ENCODE measurements at regions of chr5 and their contacts with region 1.

Region 1: GRCh38 chr5:36728697-36729543 is 122.5 kb downstream of the SLC1A3 start:
- DNase-seq: peak in 3 of 9 experiments; percentile 21 to 73 (median 64)
- ATAC-seq: peak; percentile 64
- H3K4me3 ChIP-seq: no peak overlapping the region
- H3K4me3 Mint-ChIP-seq: no peak overlapping the region
- H3K27ac ChIP-seq: no peak overlapping the region
- H3K27ac Mint-ChIP-seq: no peak overlapping the region
- H3K4me1 ChIP-seq: no peaks in the 10 kb centered on the region
- H3K4me1 Mint-ChIP-seq: peaks cover 14% of the 10 kb centered on the region
- H3K27me3 ChIP-seq: no peaks in the 10 kb centered on the region
- H3K27me3 Mint-ChIP-seq: peaks cover 2% of the 10 kb centered on the region
- CTCF ChIP-seq: peak; percentile 80

Region 2: GRCh38 chr5:36739751-36740221 is 10.9 kb after region 1 on chr5:
- CTCF ChIA-PET with region 1: interaction called, 18 read pairs
- POLR2A ChIA-PET with region 1: no interaction called
- intact Hi-C with region 1: no loop called
- DNase-seq: peak; percentile 31 to 76 (median 69)
- ATAC-seq: peak; percentile 97
- H3K4me3 ChIP-seq: no peak overlapping the region
- H3K4me3 Mint-ChIP-seq: no peak overlapping the region
- H3K27ac ChIP-seq: no peak overlapping the region
- H3K27ac Mint-ChIP-seq: no peak overlapping the region
- H3K4me1 ChIP-seq: peaks cover 6% of the 10 kb centered on the region
- H3K4me1 Mint-ChIP-seq: peaks cover 11% of the 10 kb centered on the region
- H3K27me3 ChIP-seq: no peaks in the 10 kb centered on the region
- H3K27me3 Mint-ChIP-seq: peaks cover 39% of the 10 kb centered on the region
- CTCF ChIP-seq: peak; percentile 76

Region 3: DNA sequence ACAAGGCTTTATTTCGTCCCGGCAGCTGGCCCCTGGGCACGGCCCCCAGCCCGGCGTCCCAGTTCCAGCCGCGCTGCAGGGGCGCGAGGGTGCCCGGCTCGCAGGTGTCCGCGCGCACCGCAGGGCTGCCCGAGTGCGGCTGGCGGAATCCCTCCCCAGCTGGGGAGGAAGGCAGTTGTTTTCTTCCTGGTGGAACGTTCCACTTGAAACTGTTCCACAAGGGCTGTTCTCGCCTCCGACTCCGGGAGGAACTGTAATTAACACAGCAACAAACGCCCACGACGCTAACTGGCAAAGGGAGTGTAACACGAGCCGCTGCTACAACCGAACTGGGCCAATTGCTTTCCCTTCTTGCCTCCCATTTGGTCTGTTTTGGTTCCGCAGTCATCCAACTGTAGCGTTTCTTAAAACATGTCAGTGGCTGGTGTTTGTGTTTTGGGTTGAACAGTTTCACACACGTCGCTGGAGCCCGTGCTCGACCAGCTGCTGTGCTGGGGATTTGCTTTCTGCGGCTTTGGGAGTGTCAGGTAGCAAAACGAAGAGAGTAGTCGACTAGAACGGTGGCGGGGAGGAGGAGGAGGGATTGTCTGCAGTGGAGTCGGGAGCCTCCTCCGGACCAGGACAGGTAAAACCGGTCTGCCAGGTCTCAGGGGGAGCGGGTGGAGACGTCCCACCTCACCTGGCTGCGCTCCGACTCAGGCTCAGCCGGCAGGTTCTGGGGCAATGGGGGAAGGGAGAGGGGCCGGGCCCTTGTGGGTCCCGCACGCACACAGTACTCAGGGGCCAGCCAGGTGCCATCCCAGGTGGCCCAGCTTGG is 16.1 kb after region 1 on chr5:
- CTCF ChIA-PET with region 1: interaction called, 18 read pairs
- POLR2A ChIA-PET with region 1: no interaction called
- intact Hi-C with region 1: no loop called
- DNase-seq: peak in 6 of 9 experiments; percentile 22 to 51 (median 26)
- ATAC-seq: peak; percentile 62
- H3K4me3 ChIP-seq: peak overlapping the region; percentile 37 to 74
- H3K4me3 Mint-ChIP-seq: peak overlapping the region; percentile 86
- H3K27ac ChIP-seq: no peak overlapping the region
- H3K27ac Mint-ChIP-seq: no peak overlapping the region
- H3K4me1 ChIP-seq: peaks cover 6% of the 10 kb centered on the region
- H3K4me1 Mint-ChIP-seq: peaks cover 16% of the 10 kb centered on the region
- H3K27me3 ChIP-seq: no peaks in the 10 kb centered on the region
- H3K27me3 Mint-ChIP-seq: peaks cover 43% of the 10 kb centered on the region
- CTCF ChIP-seq: no peak

Region 4: GRCh38 chr5:36870399-36871040 is 141.6 kb after region 1 on chr5:
- CTCF ChIA-PET with region 1: interaction called, 16 read pairs
- POLR2A ChIA-PET with region 1: no interaction called
- intact Hi-C with region 1: loop called in 1 of 2 experiments (anchors 1 kb)
- DNase-seq: peak in 2 of 9 experiments; percentile 73 to 82
- ATAC-seq: peak; percentile 75
- H3K4me3 ChIP-seq: no peak overlapping the region
- H3K4me3 Mint-ChIP-seq: no peak overlapping the region
- H3K27ac ChIP-seq: no peak overlapping the region
- H3K27ac Mint-ChIP-seq: peak overlapping the region; percentile 20
- H3K4me1 ChIP-seq: peaks cover 25% of the 10 kb centered on the region
- H3K4me1 Mint-ChIP-seq: peaks cover 46% of the 10 kb centered on the region
- H3K27me3 ChIP-seq: no peaks in the 10 kb centered on the region
- H3K27me3 Mint-ChIP-seq: no peaks in the 10 kb centered on the region
- CTCF ChIP-seq: peak; percentile 67

Region 5: GRCh38 chr5:37005946-37006540 is 277.1 kb after region 1 on chr5:
- CTCF ChIA-PET with region 1: interaction called, 9 read pairs
- POLR2A ChIA-PET with region 1: no interaction called
- intact Hi-C with region 1: loop called (anchors 2 to 5 kb)
- DNase-seq: peak in 2 of 9 experiments; percentile 16 to 36
- ATAC-seq: peak; percentile 51
- H3K4me3 ChIP-seq: no peak overlapping the region
- H3K4me3 Mint-ChIP-seq: no peak overlapping the region
- H3K27ac ChIP-seq: no peak overlapping the region
- H3K27ac Mint-ChIP-seq: no peak overlapping the region
- H3K4me1 ChIP-seq: no peaks in the 10 kb centered on the region
- H3K4me1 Mint-ChIP-seq: no peaks in the 10 kb centered on the region
- H3K27me3 ChIP-seq: no peaks in the 10 kb centered on the region
- H3K27me3 Mint-ChIP-seq: no peaks in the 10 kb centered on the region
- CTCF ChIP-seq: peak; percentile 62

Region 6: DNA sequence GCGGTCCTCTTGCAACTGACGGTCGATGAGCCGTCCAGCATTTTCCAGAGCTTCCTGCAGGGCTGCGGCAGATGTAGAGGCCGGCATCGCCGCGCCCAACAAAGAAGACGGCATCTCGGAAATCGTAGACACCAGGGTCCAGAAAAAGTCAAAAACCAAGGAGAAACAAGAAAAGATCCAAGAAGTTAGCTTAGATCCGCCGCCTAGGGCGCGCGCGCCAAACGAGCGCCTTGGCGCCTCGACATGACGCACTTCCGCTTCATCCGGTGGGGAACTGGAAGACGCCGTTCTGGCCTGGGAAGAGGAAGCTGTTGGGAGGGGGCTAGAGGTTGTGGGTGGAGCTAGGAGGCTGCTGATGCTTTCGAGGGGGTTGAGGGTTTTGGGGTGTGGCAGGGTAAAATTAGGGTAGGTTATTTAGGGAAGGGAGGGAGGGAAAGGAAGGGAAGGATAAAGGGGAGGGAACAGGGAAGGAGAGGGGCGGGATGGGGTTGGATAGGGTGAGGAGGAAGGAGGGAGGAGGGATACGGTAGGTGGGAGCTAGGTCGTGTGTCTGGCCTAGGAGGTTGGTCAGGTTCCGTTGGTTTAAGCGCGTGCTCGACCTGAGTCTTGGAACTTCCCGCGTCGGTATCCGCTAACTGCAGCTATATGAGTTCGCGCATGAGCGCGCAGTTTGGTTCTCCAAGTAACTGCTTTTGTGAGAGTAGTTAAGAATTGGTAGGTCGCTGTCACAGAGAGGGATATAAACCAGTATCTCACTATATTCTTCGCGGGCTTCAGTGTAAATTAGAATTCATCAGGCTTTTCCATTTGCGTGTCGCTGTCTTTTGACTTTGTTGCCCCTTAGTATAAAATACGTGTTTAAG is 642.2 kb after region 1 on chr5 and contains the start of gene NUP155:
- CTCF ChIA-PET with region 1: no interaction called
- POLR2A ChIA-PET with region 1: no interaction called
- intact Hi-C with region 1: loop called in 1 of 2 experiments (anchors 10 kb)
- DNase-seq: peak; percentile 71 to 96 (median 88)
- ATAC-seq: peak; percentile 93
- H3K4me3 ChIP-seq: peak within 1 kb of the TSS; percentile 92 to 95
- H3K4me3 Mint-ChIP-seq: peak within 1 kb of the TSS; percentile 97
- H3K27ac ChIP-seq: peak within 1 kb of the TSS; percentile 88 to 93
- H3K27ac Mint-ChIP-seq: peak within 1 kb of the TSS; percentile 97
- H3K4me1 ChIP-seq: peaks cover 18% of the 10 kb centered on the region
- H3K4me1 Mint-ChIP-seq: peaks cover 32% of the 10 kb centered on the region
- H3K27me3 ChIP-seq: no peaks in the 10 kb centered on the region
- H3K27me3 Mint-ChIP-seq: no peaks in the 10 kb centered on the region
- CTCF ChIP-seq: no peak
- total RNA-seq, gene NUP155: 22.9 to 27.4 TPM